SK-N-SH (cell line): ENCODE measurements at regions of chr1 and their contacts with region 1.

Region 1: GRCh38 chr1:19974822-19975416 is 4.5 kb downstream of the PLA2G2A start:
- DNase-seq: peak; percentile 86
- H3K4me3 ChIP-seq: peak overlapping the region in 1 of 2 experiments; percentile 33; a peak in 2 of 4 replicates
- H3K27ac ChIP-seq: no peak overlapping the region
- H3K4me1 ChIP-seq: 0 out of 4 replicates have a peak, but pooled peaks cover 0 to 2% of the 10 kb centered on the region in 2 experiments
- H3K27me3 ChIP-seq: peaks cover 13% of the 10 kb centered on the region
- CTCF ChIP-seq: peak; percentile 70
- EP300 ChIP-seq: no peak; a peak in 1 of 4 replicates
- RAD21 ChIP-seq: peak; percentile 97

Region 2: GRCh38 chr1:19597496-19598309 is 377.2 kb before region 1 on chr1:
- CTCF ChIA-PET with region 1: no interaction called
- POLR2A ChIA-PET with region 1: no interaction called
- DNase-seq: no peak
- H3K4me3 ChIP-seq: peak overlapping the region; percentile 77 to 78
- H3K27ac ChIP-seq: peak overlapping the region; percentile 76 to 87; a peak in 3 of 4 replicates
- H3K4me1 ChIP-seq: peaks cover 0 to 7% of the 10 kb centered on the region in 2 experiments; a peak in 1 of 4 replicates
- H3K27me3 ChIP-seq: no peaks in the 10 kb centered on the region
- CTCF ChIP-seq: no peak
- EP300 ChIP-seq: no peak
- RAD21 ChIP-seq: no peak

Region 3: GRCh38 chr1:20110679-20111078 is 135.8 kb after region 1 on chr1:
- CTCF ChIA-PET with region 1: interaction called, 11 read pairs
- POLR2A ChIA-PET with region 1: no interaction called
- DNase-seq: no peak
- H3K4me3 ChIP-seq: no peak overlapping the region
- H3K27ac ChIP-seq: peak overlapping the region in 1 of 2 experiments; percentile 5; a peak in 1 of 4 replicates
- H3K4me1 ChIP-seq: no peaks in the 10 kb centered on the region
- H3K27me3 ChIP-seq: no peaks in the 10 kb centered on the region
- CTCF ChIP-seq: no peak
- EP300 ChIP-seq: no peak; a peak in 1 of 4 replicates
- RAD21 ChIP-seq: no peak

Region 4: DNA sequence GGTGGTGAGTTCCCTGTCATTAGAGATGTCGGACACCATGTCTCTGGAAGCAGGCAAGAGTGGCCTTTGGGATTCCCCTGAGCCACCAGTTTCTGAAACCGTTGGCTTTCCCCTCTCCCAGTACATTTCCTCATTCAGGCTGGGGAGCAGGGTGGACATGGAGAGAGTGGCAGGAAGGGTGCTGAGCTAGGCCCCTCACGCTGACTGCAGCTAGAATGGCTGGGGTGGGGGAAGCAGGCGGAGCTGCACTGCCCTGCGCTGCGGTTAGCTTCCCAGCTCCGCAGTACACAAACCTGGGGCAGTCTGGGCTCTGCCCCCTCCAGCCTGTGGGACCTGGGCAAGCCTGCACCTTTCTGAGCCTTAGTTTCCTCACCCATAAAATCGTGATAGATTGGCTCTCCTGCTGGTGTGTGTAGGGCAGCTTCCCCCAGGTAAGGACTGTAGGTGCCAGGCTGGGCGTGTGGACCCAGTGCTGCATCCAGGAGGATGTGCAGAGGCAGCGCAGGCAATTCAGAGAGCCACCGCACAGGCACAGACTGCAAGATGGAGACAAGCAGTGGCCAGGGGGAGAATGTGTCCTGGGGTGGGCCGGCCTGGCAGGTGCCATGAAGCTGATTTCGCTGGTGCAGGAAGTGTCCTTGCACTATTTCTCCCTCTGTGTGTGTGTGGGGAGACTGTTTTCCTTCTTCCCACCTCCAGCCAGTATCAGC is 167.2 kb after region 1 on chr1:
- CTCF ChIA-PET with region 1: interaction called, 11 read pairs
- POLR2A ChIA-PET with region 1: no interaction called
- DNase-seq: no peak
- H3K4me3 ChIP-seq: no peak overlapping the region
- H3K27ac ChIP-seq: no peak overlapping the region
- H3K4me1 ChIP-seq: no peaks in the 10 kb centered on the region
- H3K27me3 ChIP-seq: no peaks in the 10 kb centered on the region; the same call in 1 of the 2 replicates
- CTCF ChIP-seq: no peak
- EP300 ChIP-seq: no peak
- RAD21 ChIP-seq: no peak